Activated naive CD4-positive, alpha-beta T cell treated with anti-CD3 and anti-CD28 coated beads for 36 hours (primary cell): ENCODE measurements at regions of chr22 and their contacts with region 1.

Region 1: GRCh38 chr22:46116491-46116958 is 33.8 kb upstream of the PPARA start:
- DNase-seq: peak; percentile 91
- H3K4me3 Mint-ChIP-seq: no peak overlapping the region
- H3K27ac Mint-ChIP-seq: no peak overlapping the region
- H3K4me1 Mint-ChIP-seq: no peaks in the 10 kb centered on the region
- H3K27me3 Mint-ChIP-seq: no peaks in the 10 kb centered on the region

Region 2: GRCh38 chr22:45918459-45919370 is 197.8 kb before region 1 on chr22:
- CTCF ChIA-PET with region 1: no interaction called
- intact Hi-C with region 1: no loop called
- DNase-seq: no peak
- H3K4me3 Mint-ChIP-seq: no peak overlapping the region
- H3K27ac Mint-ChIP-seq: no peak overlapping the region
- H3K4me1 Mint-ChIP-seq: no peaks in the 10 kb centered on the region
- H3K27me3 Mint-ChIP-seq: no peaks in the 10 kb centered on the region

Region 3: DNA sequence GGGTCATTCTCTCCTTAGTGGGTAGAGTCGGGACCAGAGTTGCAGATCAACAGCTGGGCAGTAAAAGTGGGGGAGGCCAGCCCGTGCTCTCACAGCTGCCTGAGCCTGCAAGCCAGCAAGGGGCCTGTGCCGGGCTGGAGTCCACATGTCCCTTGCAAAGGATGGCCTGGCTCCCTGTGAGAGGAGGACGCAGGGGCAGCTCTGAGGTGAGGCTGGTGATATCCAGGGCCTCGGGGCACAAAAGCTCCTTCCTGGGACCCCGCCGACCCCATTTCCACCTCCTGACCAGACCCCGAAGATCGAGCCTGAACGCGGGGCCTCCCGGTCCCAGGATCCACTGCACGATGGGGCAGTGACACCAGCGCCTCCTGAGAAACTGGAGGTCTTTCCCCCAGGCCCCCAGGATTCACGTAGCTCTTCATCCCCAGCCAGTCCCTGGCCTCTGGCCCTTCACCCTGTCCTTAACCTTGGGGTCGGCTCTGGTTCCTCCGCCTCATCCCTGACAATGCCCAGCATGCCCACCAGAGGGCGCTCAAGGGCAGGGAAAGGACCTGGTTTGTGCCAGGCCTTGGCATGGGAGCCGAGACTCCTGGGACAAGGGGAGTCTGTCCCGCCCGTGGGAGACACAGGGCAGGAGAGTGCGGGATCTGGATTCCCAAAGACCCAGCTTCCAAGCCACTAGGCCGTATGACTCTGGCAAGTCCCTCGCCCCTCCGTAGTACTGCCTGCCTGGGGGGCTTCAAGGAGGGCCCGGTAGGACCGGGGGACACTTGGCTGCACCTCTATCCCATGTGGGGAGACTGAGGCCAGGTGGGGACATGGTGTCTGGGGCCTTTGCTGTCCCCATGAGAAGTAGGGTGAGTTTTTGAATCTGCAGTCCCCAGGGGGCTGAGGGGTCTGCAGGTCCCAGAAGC is 121.8 kb before region 1 on chr22:
- CTCF ChIA-PET with region 1: interaction called, 18 read pairs
- intact Hi-C with region 1: loop called (anchors 1 kb)
- DNase-seq: peak; percentile 88
- H3K4me3 Mint-ChIP-seq: no peak overlapping the region
- H3K27ac Mint-ChIP-seq: no peak overlapping the region
- H3K4me1 Mint-ChIP-seq: no peaks in the 10 kb centered on the region
- H3K27me3 Mint-ChIP-seq: no peaks in the 10 kb centered on the region

Region 4: DNA sequence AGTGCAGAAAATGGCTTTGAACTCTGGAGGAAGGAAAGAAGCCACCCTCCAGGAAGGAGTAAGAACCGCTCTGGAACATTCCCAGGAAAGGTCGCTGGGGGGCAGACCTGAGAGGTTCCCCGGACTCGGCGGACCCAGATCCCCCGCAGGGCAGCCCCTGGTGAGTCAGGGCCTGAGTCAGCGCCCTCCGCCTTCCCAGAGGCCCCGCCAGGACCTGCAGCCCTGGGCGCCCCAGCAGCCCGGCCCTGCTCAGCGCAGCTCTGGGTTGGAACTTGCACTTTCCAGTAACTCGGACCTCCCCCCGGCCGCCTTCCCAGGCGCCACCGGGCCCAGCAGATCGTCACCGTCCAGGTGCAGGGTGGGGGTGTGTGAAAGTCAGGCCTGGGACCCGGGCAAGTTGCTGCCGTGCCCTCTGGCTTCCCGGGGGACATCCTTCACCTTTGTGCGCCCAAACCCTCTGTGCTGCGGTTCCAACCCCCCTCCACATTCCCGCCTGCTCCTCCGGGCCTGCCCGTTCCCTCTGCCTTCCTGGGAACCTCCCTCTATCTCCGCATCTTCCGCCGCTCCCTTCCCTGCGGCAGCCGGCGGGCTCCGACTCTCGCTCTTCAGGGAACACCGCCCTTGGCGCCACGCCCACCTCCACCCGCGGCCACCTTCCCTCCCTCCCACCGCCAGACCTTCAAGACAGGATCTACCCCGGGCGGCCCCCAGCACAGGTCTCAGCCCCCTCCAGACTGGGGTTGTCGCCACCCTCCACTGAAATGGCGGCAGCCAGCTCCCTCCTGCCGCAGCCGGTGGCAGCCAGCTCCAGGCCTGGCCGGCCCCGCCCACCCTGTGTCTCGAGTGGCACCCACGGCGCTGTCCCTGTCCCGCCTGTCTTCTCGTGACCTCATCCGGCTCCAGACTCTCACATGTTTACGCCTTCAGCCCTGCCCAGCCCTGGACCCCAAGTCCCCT is 102.8 kb before region 1 on chr22:
- CTCF ChIA-PET with region 1: interaction called, 209 read pairs
- intact Hi-C with region 1: loop called (anchors 1 kb)
- DNase-seq: peak; percentile 97
- H3K4me3 Mint-ChIP-seq: peak overlapping the region; percentile 81
- H3K27ac Mint-ChIP-seq: peak overlapping the region; percentile 83
- H3K4me1 Mint-ChIP-seq: peaks cover 5% of the 10 kb centered on the region
- H3K27me3 Mint-ChIP-seq: no peaks in the 10 kb centered on the region

Region 5: GRCh38 chr22:46019351-46019750 is 97.2 kb before region 1 on chr22:
- CTCF ChIA-PET with region 1: interaction called, 209 read pairs
- intact Hi-C with region 1: no loop called
- DNase-seq: no peak
- H3K4me3 Mint-ChIP-seq: no peak overlapping the region
- H3K27ac Mint-ChIP-seq: no peak overlapping the region
- H3K4me1 Mint-ChIP-seq: no peaks in the 10 kb centered on the region
- H3K27me3 Mint-ChIP-seq: no peaks in the 10 kb centered on the region

Region 6: GRCh38 chr22:46066691-46067090 is 49.8 kb before region 1 on chr22:
- CTCF ChIA-PET with region 1: no interaction called
- intact Hi-C with region 1: no loop called
- DNase-seq: no peak
- H3K4me3 Mint-ChIP-seq: no peak overlapping the region
- H3K27ac Mint-ChIP-seq: peak overlapping the region; percentile 48
- H3K4me1 Mint-ChIP-seq: peaks cover 42% of the 10 kb centered on the region
- H3K27me3 Mint-ChIP-seq: no peaks in the 10 kb centered on the region

Region 7: GRCh38 chr22:46196278-46196677 is 79.8 kb after region 1 on chr22:
- CTCF ChIA-PET with region 1: no interaction called
- intact Hi-C with region 1: no loop called
- DNase-seq: no peak
- H3K4me3 Mint-ChIP-seq: no peak overlapping the region
- H3K27ac Mint-ChIP-seq: no peak overlapping the region
- H3K4me1 Mint-ChIP-seq: no peaks in the 10 kb centered on the region
- H3K27me3 Mint-ChIP-seq: no peaks in the 10 kb centered on the region

Region 8: GRCh38 chr22:46219636-46220035 is 103.1 kb after region 1 on chr22:
- CTCF ChIA-PET with region 1: no interaction called
- intact Hi-C with region 1: no loop called
- DNase-seq: peak; percentile 29
- H3K4me3 Mint-ChIP-seq: no peak overlapping the region
- H3K27ac Mint-ChIP-seq: no peak overlapping the region
- H3K4me1 Mint-ChIP-seq: peaks cover 12% of the 10 kb centered on the region
- H3K27me3 Mint-ChIP-seq: no peaks in the 10 kb centered on the region

Region 9: GRCh38 chr22:46317646-46318045 is 201.1 kb after region 1 on chr22:
- CTCF ChIA-PET with region 1: interaction called, 27 read pairs
- intact Hi-C with region 1: no loop called
- DNase-seq: no peak
- H3K4me3 Mint-ChIP-seq: no peak overlapping the region
- H3K27ac Mint-ChIP-seq: no peak overlapping the region
- H3K4me1 Mint-ChIP-seq: no peaks in the 10 kb centered on the region
- H3K27me3 Mint-ChIP-seq: no peaks in the 10 kb centered on the region